AG04449 (cell line): ENCODE measurements at regions of chr15 and their contacts with region 1.

Region 1: DNA sequence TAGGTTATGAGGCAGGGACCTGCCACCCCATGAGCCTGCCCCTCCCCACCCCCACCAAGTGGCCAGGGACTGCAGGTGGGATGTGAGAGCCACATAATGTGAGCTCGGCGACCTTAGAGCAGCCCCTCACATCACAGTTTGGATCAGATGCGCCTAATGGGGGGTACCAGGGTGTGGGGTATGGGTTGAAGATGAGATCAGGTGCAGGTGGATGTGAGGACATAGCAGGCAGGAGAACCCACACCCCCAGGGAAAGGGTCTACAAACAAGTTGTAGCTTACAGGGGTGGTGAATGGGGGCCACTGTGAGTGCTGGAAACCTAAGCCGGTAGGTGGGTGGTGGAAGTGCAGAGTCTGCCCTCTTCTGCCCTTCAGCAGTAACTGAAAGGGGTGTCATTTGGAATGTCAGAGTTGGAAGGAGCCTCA is 94.0 kb downstream of the CORO2B start:
- DNase-seq: no peak
- H3K4me3 ChIP-seq: no peak overlapping the region
- CTCF ChIP-seq: peak; percentile 49

Region 2: DNA sequence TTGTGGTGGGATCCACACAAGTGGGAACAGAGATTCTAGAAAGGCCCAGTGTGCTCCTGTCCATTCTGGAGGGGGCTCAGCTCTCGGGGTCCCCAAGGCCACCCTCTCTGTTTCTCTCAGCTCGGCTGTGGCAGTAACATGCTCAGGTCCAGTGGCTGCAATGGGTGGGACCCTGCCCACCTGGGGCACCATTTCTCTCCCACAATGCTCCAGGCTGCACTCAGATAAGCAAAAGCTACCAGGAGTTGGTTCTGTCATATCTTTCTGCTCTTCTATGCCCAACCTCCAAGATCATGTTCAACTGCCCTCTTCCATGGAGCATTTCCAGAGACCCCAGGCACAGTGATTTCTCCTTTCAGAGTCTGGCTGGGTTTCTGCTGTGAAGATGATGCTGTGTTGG is 281.7 kb before region 1 on chr15:
- CTCF ChIA-PET with region 1: no interaction called
- POLR2A ChIA-PET with region 1: no interaction called
- DNase-seq: no peak
- H3K4me3 ChIP-seq: no peak overlapping the region
- CTCF ChIP-seq: no peak

Region 3: GRCh38 chr15:68550481-68551295 is 122.1 kb before region 1 on chr15:
- CTCF ChIA-PET with region 1: interaction called, 388 read pairs
- POLR2A ChIA-PET with region 1: no interaction called
- DNase-seq: no peak
- H3K4me3 ChIP-seq: no peak overlapping the region
- CTCF ChIP-seq: peak; percentile 80

Region 4: DNA sequence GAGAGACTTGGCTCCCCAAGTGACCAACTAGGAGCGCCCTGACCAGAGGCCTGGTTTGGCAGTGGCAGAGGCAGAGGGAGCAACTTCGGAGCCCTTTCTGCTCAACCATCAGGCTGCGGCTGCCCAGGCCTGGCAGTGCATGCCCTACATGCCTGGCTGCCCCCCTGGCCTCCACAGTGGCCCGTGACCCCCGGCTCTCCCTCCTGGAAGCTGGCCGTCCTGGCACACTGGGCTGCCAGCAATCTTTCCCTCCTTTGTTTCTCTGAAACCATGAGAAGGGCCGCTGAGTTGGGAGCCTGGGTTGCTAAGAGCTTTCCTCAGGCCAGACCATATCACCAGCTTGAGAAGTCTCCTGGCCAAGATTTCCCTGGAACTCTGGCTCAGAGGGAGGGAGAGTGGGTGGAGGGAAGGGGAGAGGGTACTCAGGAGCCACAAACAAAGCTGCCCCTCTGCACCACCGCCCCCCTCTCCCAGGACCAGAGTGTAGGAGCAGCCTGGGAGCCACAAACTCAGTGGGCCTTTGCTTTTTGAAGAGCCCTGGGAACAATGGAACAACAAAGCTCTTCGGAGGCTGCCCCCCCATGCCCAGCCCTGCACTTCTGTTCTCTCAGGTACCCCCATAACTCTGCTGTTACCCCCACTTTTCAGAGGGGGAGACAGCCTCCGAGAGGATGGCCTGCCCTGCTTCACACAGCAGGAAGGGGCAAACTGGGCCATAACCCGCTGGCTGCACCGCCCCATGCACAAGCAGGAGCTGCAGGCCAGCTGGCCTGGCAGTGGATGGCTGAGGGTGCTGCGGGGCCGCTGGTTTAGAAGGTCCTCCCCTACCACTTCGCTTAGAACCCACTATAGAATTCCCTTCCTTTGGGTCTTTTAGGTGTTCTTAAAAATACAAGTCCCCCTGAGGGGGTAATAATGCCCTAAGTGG is 82.7 kb before region 1 on chr15:
- CTCF ChIA-PET with region 1: interaction called, 20 read pairs
- POLR2A ChIA-PET with region 1: no interaction called
- DNase-seq: no peak
- H3K4me3 ChIP-seq: no peak overlapping the region
- CTCF ChIP-seq: no peak

Region 5: GRCh38 chr15:68650901-68651709 is 21.7 kb before region 1 on chr15:
- CTCF ChIA-PET with region 1: interaction called, 199 read pairs
- POLR2A ChIA-PET with region 1: no interaction called
- DNase-seq: no peak
- H3K4me3 ChIP-seq: no peak overlapping the region
- CTCF ChIP-seq: peak; percentile 85

Region 6: DNA sequence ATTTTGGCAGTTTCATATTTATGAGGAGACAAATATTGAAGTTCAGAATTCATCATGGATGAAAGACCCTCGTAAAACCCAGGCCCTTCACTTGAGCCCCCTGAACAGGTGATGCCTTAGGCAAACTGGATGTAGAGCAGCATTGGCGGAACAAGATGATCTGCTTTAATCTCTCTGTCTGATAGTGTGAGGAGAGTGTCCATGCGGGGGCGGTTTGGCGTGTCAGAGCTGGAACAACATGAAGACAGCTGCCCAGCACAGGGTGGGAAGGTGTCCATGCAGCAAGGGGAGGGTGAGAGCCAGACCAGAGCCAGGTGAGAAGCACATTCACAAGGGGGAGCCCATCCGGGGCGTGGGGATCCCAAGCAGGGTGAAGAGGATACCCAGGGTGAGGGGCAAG is 179.7 kb after region 1 on chr15:
- CTCF ChIA-PET with region 1: no interaction called
- POLR2A ChIA-PET with region 1: no interaction called
- DNase-seq: no peak
- H3K4me3 ChIP-seq: no peak overlapping the region
- CTCF ChIP-seq: no peak

Region 7: DNA sequence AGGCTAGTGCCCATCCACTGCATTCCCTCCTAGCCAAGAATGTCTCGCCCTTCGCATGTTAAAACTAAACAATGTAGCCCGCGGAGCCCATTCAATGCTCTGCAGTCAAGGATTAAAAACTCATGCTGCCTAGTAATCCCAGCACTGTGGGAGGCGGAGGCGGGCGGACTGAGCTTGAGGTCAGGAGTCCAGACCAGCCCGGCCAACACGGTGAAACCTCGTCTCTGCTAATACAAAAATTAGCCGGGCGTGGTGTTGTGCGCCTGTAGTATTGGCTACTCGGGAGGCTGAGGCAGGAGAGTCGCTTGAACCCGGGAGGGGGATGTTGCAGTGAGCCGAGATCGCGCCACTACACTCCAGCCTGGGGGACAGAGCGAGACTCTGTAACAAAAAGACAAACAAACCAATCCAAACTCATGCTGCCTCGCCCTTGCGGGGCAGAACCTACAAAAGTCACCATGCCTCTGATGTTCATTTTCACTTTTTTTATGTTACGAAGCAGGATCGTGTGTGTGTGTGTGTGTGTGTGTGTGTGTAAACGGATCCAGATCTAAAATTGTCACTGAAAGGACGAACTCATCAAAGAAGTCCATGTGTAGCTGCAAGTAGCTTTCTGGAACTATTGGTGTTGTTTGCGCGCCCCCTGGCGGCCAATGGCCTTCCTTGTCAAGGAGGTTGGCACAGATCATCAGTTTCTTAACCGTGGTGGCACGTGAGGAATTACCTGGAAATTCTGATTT is 202.8 kb after region 1 on chr15:
- CTCF ChIA-PET with region 1: interaction called, 48 read pairs
- POLR2A ChIA-PET with region 1: no interaction called
- DNase-seq: peak; percentile 56
- H3K4me3 ChIP-seq: peak overlapping the region; percentile 56
- CTCF ChIP-seq: peak; percentile 87